ENCODE measurements at regions of chr1 and their contacts with region 1.

Region 1: GRCh38 chr1:31669786-31670592 is 25.3 kb upstream of the PEF1 start:
- DNase-seq: peak; percentile 79 to 84 (median 83)
- H3K4me3 ChIP-seq: peak overlapping the region; percentile 1
- H3K27ac ChIP-seq: peak overlapping the region; percentile 43 to 49
- H3K4me1 ChIP-seq: peaks cover 18% of the 10 kb centered on the region
- H3K27me3 ChIP-seq: no peaks in the 10 kb centered on the region
- CTCF ChIP-seq: no peak
- EP300 ChIP-seq: no peak
- POLR2A ChIP-seq: no peak

Region 2: DNA sequence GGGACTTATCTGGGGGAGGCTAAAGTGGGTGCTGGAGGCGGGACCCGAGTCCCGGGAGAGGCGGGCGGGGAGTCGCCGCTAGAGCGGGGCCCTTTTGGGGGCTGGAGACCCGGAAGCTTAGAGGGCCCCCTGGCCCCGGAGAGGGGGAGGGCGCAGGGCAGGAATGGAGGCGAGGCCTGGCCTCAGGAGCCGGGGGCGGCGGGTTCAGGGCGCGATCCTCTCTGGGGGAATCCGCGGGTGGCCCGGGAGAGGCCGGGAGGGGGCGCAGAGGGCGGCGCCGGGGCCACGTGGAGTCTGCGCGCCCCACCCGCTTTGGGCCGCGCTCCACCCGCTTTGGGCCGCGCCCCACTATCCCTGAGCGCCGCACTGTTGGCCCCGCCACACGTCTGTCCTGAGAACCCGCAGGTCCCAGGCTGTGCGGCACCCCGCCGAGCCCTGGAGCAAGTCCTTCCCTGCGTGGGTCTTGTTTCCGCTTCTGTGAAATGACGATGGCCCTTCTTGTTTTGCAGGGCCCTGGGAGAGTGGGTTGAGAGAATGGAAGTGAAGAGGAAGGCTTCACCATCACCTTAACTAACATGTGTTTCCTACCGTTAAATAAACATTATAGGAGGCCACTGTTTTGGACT is 514.7 kb before region 1 on chr1:
- intact Hi-C with region 1: no loop called
- DNase-seq: peak; percentile 44 to 79 (median 68)
- H3K4me3 ChIP-seq: peak overlapping the region; percentile 54
- H3K27ac ChIP-seq: peak overlapping the region in 1 of 2 donors; percentile 63
- H3K4me1 ChIP-seq: no peaks in the 10 kb centered on the region
- H3K27me3 ChIP-seq: no peaks in the 10 kb centered on the region
- CTCF ChIP-seq: peak in 1 of 3 donors; percentile 21
- EP300 ChIP-seq: no peak
- POLR2A ChIP-seq: no peak

Region 3: GRCh38 chr1:31705080-31705866 is 35.3 kb after region 1 on chr1:
- intact Hi-C with region 1: loop called in 3 of 4 experiments (anchors 2 to 5 kb)
- DNase-seq: peak; percentile 81 to 85 (median 84)
- H3K4me3 ChIP-seq: no peak overlapping the region
- H3K27ac ChIP-seq: peak overlapping the region; percentile 34 to 89
- H3K4me1 ChIP-seq: peaks cover 29% of the 10 kb centered on the region
- H3K27me3 ChIP-seq: no peaks in the 10 kb centered on the region
- CTCF ChIP-seq: peak in 2 of 3 donors; percentile 12 to 48
- EP300 ChIP-seq: no peak
- POLR2A ChIP-seq: no peak

Region 4: GRCh38 chr1:31715087-31715872 is 45.3 kb after region 1 on chr1:
- intact Hi-C with region 1: loop called in 1 of 4 experiments (anchors 5 kb)
- DNase-seq: peak; percentile 96 to 98 (median 96)
- H3K4me3 ChIP-seq: peak overlapping the region; percentile 33
- H3K27ac ChIP-seq: peak overlapping the region; percentile 92 to 97
- H3K4me1 ChIP-seq: peaks cover 17% of the 10 kb centered on the region
- H3K27me3 ChIP-seq: no peaks in the 10 kb centered on the region
- CTCF ChIP-seq: peak; percentile 91 to 93 (median 91)
- EP300 ChIP-seq: no peak
- POLR2A ChIP-seq: peak; percentile 62

Region 5: GRCh38 chr1:31745096-31745945 is 75.3 kb after region 1 on chr1:
- intact Hi-C with region 1: loop called in 2 of 4 experiments (anchors 5 to 10 kb)
- DNase-seq: peak; percentile 58 to 85 (median 78)
- H3K4me3 ChIP-seq: no peak overlapping the region
- H3K27ac ChIP-seq: no peak overlapping the region
- H3K4me1 ChIP-seq: no peaks in the 10 kb centered on the region
- H3K27me3 ChIP-seq: no peaks in the 10 kb centered on the region
- CTCF ChIP-seq: peak; percentile 48 to 81 (median 69)
- EP300 ChIP-seq: no peak
- POLR2A ChIP-seq: no peak

Region 6: DNA sequence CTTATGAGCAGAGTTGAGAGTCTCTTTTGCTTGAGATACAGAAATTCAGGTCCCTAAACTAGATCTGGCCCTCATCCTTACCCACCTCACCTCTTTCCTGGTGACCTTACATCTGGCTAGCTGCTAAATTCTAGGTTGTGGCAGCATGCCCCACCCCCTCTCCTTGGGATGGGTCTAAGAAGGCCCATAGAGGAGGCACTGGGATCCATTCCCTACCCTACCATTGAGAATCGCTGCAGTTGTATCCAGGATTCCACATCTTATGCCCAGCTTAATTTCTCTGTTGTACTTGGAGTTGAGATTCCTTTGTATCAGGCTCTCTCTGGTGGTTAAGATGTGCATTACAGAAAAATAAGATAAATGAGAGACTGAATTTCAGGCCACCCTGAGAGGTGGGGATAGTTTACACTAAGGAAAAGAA is 393.3 kb after region 1 on chr1:
- intact Hi-C with region 1: loop called in 2 of 4 experiments (anchors 5 to 10 kb)
- DNase-seq: no peak
- H3K4me3 ChIP-seq: no peak overlapping the region
- H3K27ac ChIP-seq: peak overlapping the region in 1 of 2 donors; percentile 39
- H3K4me1 ChIP-seq: peaks cover 12% of the 10 kb centered on the region
- H3K27me3 ChIP-seq: no peaks in the 10 kb centered on the region
- CTCF ChIP-seq: peak; percentile 29 to 79 (median 71)
- EP300 ChIP-seq: no peak
- POLR2A ChIP-seq: no peak